Thyroid gland (tissue), 4 donors: ENCODE measurements at regions of chr3 and their contacts with region 1.

Region 1: DNA sequence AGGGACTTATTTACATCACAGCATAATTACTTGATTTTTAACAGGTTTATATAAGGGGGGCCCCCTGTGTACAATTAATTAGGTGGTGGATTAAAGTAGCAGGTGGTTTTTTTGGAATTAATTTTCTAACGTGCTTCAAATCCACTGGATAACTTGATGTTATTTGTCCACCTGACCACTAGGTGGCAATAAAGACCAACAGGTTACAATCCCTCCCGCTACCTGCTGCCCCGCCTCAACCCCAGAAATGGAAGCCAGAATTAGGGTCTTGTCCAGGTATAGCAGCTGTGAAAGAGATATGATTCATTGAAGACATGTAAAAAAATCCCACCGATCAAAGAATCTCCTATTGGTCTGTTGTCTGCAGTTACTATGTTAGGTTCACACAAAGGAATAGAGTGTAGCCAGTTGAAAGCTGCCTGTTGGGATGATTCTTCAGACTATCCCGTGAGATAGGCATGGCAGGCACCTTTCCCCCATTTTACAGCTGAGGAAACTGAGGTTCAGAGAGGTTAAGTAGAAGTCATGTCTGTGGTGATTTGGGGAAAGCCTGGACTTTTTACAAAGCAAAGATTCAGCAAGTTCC is 44.0 kb downstream of the MFSD1 start:
- DNase-seq: peak in 1 of 2 donors; percentile 19
- H3K4me3 ChIP-seq: no peak overlapping the region
- H3K27ac ChIP-seq: no peak overlapping the region
- H3K4me1 ChIP-seq: no peaks in the 10 kb centered on the region
- H3K27me3 ChIP-seq: no peaks in the 10 kb centered on the region
- CTCF ChIP-seq: peak; percentile 16 to 73 (median 68)
- POLR2A ChIP-seq: no peak

Region 2: GRCh38 chr3:159258934-159259333 is 413.1 kb after region 1 on chr3:
- intact Hi-C with region 1: loop called (anchors 5 kb)
- DNase-seq: no peak
- H3K4me3 ChIP-seq: no peak overlapping the region
- H3K27ac ChIP-seq: no peak overlapping the region
- H3K4me1 ChIP-seq: no peaks in the 10 kb centered on the region
- H3K27me3 ChIP-seq: no peaks in the 10 kb centered on the region
- CTCF ChIP-seq: no peak
- POLR2A ChIP-seq: no peak